ENCODE measurements at regions of chr4 and their contacts with region 1.

Region 1: DNA sequence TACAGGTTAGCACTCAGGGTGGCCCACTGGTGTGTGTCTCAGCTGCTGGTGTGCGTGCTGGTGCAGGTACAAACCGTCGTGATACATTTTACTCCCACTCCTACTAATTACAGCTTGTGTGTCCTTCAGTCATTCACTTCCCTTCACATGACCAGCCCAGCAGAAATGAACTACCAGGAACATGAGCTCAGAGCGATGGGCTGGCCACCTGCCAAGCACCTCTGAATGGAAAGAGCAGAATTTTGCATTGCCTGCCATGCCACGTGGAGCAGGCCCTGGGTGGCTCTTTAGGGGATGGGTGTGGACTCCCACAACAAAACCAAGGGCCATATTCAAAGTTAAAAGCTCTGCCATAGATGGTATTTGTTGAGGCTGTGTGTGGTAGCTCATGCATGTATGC is 58.9 kb upstream of the PGM2 start:
- DNase-seq: peak; percentile 11 to 49 (median 30)
- H3K4me3 ChIP-seq: no peak overlapping the region
- H3K27ac ChIP-seq: no peak overlapping the region
- H3K4me1 ChIP-seq: no peaks in the 10 kb centered on the region
- H3K27me3 ChIP-seq: no peaks in the 10 kb centered on the region
- CTCF ChIP-seq: no peak
- EP300 ChIP-seq: no peak
- POLR2A ChIP-seq: no peak

Region 2: GRCh38 chr4:39574946-39575345 is 1807.4 kb after region 1 on chr4:
- intact Hi-C with region 1: loop called in 1 of 4 experiments (anchors 5 kb)
- DNase-seq: no peak
- H3K4me3 ChIP-seq: no peak overlapping the region
- H3K27ac ChIP-seq: no peak overlapping the region
- H3K4me1 ChIP-seq: no peaks in the 10 kb centered on the region
- H3K27me3 ChIP-seq: no peaks in the 10 kb centered on the region
- CTCF ChIP-seq: no peak
- EP300 ChIP-seq: no peak
- POLR2A ChIP-seq: no peak